Thyroid gland (tissue), 4 donors: ENCODE measurements at regions of chr1 and their contacts with region 1.

Region 1: GRCh38 chr1:100122177-100122576 is 10.6 kb downstream of the SASS6 start:
- DNase-seq: no peak
- H3K4me3 ChIP-seq: no peak overlapping the region
- H3K27ac ChIP-seq: no peak overlapping the region
- H3K4me1 ChIP-seq: no peaks in the 10 kb centered on the region
- H3K27me3 ChIP-seq: no peaks in the 10 kb centered on the region
- CTCF ChIP-seq: no peak
- POLR2A ChIP-seq: no peak

Region 2: GRCh38 chr1:100077531-100077930 is 44.6 kb before region 1 on chr1:
- intact Hi-C with region 1: loop called (anchors 10 kb)
- DNase-seq: no peak
- H3K4me3 ChIP-seq: no peak overlapping the region
- H3K27ac ChIP-seq: no peak overlapping the region
- H3K4me1 ChIP-seq: no peaks in the 10 kb centered on the region
- H3K27me3 ChIP-seq: no peaks in the 10 kb centered on the region
- CTCF ChIP-seq: no peak
- POLR2A ChIP-seq: no peak